ENCODE measurements at regions of chr3 and their contacts with region 1.

Region 1: DNA sequence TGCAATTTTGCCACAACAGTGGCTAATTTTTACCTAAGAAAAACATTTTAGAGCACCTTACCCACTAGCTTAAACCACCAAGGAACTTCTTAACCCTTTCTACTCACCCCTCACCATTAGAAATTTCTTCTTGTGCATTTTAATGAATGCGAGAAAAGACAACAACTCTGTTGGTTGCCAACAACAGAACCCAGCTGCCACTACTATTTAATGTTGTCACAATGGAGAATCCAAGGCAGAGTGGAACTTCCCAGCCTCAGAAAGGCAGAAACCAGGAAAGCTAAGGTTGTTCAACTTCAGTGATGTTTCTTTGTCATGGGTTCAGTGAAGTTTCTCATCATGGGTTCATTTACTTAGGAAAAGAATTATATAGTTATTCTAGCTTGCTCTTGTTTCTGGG is 325.2 kb upstream of the ARL6 start:
- DNase-seq: no peak
- H3K4me3 ChIP-seq: no peak overlapping the region
- H3K27ac ChIP-seq: no peak overlapping the region
- H3K4me1 ChIP-seq: no peaks in the 10 kb centered on the region
- H3K27me3 ChIP-seq: no peaks in the 10 kb centered on the region
- CTCF ChIP-seq: no peak

Region 2: GRCh38 chr3:97409612-97410011 is 29.8 kb before region 1 on chr3:
- CTCF ChIA-PET with region 1: no interaction called
- POLR2A ChIA-PET with region 1: no interaction called
- intact Hi-C with region 1: loop called (anchors 2 kb)
- DNase-seq: no peak
- H3K4me3 ChIP-seq: no peak overlapping the region
- H3K27ac ChIP-seq: no peak overlapping the region
- H3K4me1 ChIP-seq: no peaks in the 10 kb centered on the region
- H3K27me3 ChIP-seq: no peaks in the 10 kb centered on the region
- CTCF ChIP-seq: no peak